OCI-LY7 (cell line): ENCODE measurements at regions of chr1 and their contacts with region 1.

Region 1: GRCh38 chr1:236465959-236466303 is 57.9 kb upstream of the LGALS8 start:
- DNase-seq: peak; percentile 6
- H3K4me3 ChIP-seq: no peak overlapping the region
- H3K27ac ChIP-seq: no peak overlapping the region
- H3K4me1 ChIP-seq: peaks cover 4% of the 10 kb centered on the region
- CTCF ChIP-seq: no peak

Region 2: GRCh38 chr1:236289492-236290131 is 176.3 kb before region 1 on chr1:
- CTCF ChIA-PET with region 1: no interaction called
- POLR2A ChIA-PET with region 1: interaction called, 11 read pairs
- intact Hi-C with region 1: no loop called
- DNase-seq: no peak
- H3K4me3 ChIP-seq: no peak overlapping the region
- H3K27ac ChIP-seq: no peak overlapping the region
- H3K4me1 ChIP-seq: peaks cover 21% of the 10 kb centered on the region
- CTCF ChIP-seq: no peak

Region 3: DNA sequence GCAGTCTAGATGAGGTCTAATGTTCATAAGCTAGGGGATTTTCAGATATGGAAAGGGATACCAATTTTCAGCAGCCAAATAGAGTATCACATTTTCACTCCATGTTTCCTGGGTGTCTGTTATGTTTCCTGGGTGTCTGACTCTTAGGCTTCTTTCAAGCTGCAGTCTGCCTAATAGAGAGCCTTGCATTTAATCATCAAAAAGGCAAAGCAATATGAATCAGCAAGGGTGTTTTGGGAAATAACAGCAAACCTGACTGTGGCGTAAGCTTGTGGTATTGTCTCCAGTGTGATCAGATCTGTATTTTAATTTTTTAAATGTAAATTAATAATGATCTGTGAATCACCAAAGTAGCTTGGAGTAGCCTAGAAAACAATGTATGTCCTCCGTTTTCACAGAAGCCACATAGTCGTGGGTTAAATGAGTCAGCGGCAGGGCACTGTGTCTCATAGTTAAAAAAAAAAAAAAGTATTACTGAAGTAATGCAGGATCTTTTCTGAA is 68.3 kb after region 1 on chr1:
- CTCF ChIA-PET with region 1: no interaction called
- POLR2A ChIA-PET with region 1: no interaction called
- intact Hi-C with region 1: no loop called
- DNase-seq: no peak
- H3K4me3 ChIP-seq: no peak overlapping the region
- H3K27ac ChIP-seq: no peak overlapping the region
- H3K4me1 ChIP-seq: peaks cover 16% of the 10 kb centered on the region
- CTCF ChIP-seq: no peak